Ovary (tissue), 10 donors: ENCODE measurements at regions of chr15 and their contacts with region 1.

Region 1: GRCh38 chr15:83462953-83463433 is 15.9 kb downstream of the SH3GL3 start:
- DNase-seq: no peak
- H3K4me3 ChIP-seq: no peak overlapping the region
- H3K27ac ChIP-seq: no peak overlapping the region
- H3K4me1 ChIP-seq: no peaks in the 10 kb centered on the region
- H3K27me3 ChIP-seq: no peaks in the 10 kb centered on the region
- CTCF ChIP-seq: no peak
- EP300 ChIP-seq: no peak
- POLR2A ChIP-seq: no peak

Region 2: DNA sequence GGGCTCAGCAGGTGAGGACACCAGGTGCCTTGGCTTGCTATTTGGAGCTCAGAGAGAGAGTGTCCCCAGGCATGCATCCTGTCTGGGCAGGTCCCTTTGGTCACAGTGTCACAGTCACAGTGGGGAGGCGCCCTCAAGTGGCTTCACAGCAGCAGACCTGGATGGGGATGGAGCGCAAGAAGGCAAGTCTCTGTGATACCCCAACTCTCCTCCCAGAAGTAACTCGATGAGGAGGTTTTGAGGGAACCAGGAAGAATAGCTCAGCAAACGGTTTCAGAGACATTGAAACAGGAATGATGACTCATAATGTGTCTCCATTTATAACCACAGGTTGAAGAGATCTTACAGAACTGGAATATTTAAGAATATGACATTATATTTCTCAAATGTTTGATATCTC is 82.3 kb before region 1 on chr15:
- intact Hi-C with region 1: no loop called
- DNase-seq: no peak
- H3K4me3 ChIP-seq: no peak overlapping the region
- H3K27ac ChIP-seq: no peak overlapping the region
- H3K4me1 ChIP-seq: no peaks in the 10 kb centered on the region
- H3K27me3 ChIP-seq: no peaks in the 10 kb centered on the region
- CTCF ChIP-seq: no peak
- EP300 ChIP-seq: no peak
- POLR2A ChIP-seq: no peak

Region 3: DNA sequence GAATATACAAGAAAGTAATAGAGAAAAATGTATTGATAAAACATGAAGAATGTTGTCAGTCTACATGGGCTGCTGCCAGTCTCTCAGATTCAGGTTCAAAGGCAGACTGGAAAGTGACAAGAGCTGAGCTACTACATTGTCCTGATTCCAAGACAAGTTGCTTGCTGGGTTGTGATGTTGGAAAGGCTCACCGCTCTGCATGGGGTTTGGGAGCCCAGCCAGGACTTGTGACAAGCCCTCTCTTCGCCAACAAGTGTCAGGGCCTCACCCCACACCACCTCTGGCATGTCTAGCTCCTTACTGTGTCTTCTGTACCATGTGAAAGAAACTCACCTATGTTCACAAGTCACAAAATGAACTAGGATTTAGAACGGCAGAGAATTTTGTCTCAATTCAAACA is 58.9 kb before region 1 on chr15:
- intact Hi-C with region 1: loop called in 1 of 4 experiments (anchors 10 kb)
- DNase-seq: no peak
- H3K4me3 ChIP-seq: no peak overlapping the region
- H3K27ac ChIP-seq: no peak overlapping the region
- H3K4me1 ChIP-seq: no peaks in the 10 kb centered on the region
- H3K27me3 ChIP-seq: no peaks in the 10 kb centered on the region
- CTCF ChIP-seq: no peak
- EP300 ChIP-seq: no peak
- POLR2A ChIP-seq: no peak

Region 4: GRCh38 chr15:83673385-83673784 is 210.4 kb after region 1 on chr15:
- intact Hi-C with region 1: no loop called
- DNase-seq: no peak
- H3K4me3 ChIP-seq: no peak overlapping the region
- H3K27ac ChIP-seq: no peak overlapping the region
- H3K4me1 ChIP-seq: no peaks in the 10 kb centered on the region
- H3K27me3 ChIP-seq: no peaks in the 10 kb centered on the region
- CTCF ChIP-seq: no peak
- EP300 ChIP-seq: no peak
- POLR2A ChIP-seq: no peak